Activated CD8-positive, alpha-beta T cell treated with anti-CD3 and anti-CD28 coated beads, Interleukin-2, amount 10 ng/mL, durations not matched to agents 7 days and 5 days (primary cell): ENCODE measurements at regions of chr1 and their contacts with region 1.

Region 1: DNA sequence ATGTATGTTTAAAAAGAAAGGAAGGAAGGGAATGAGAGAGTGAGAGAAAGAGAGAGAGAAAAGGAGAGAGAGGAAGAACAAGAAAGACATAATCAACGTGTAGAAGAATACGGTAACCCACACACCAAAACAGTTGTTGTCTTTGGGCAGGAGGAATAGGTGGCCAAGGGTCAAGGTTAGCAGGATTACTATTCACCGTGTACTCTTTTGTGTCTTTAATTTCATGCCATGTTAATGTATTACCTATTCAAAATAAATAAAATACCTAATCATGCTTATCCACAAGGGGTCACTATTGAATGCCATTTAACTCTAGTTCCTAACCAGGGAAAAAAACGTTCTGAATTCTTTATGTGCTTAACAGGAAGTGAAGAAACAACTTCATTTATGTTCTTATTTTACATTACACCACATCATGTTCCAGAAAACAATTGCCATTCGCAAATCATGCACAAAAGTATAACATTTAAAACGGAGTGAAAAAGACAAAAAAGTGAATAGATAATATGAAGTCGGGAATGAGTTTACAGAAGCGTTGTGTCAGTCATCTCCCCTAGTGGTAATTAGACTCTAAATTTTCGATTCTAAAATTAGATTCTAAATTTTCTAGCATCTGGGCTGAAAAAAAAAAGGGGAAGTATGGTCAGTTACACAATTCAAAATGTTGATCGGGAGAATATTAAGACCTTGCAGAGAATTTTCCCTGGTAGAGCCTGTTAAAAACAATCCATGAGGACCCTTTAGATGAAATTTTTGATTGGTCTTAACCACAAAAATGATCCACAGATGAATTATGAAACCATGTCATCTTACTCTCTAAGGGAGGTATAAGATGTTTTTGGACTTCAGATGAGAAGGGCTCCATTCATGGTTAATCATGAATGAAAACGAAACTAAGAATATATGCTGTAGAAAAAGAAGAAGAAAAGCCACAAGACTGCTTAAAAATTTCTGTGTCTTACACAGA is 700 bp upstream of the KMO start:
- DNase-seq: no peak
- ATAC-seq: peak; percentile 87
- H3K4me3 Mint-ChIP-seq: peak overlapping the region; percentile 92
- H3K27ac Mint-ChIP-seq: peak overlapping the region; percentile 88
- H3K4me1 Mint-ChIP-seq: peaks cover 11% of the 10 kb centered on the region
- H3K27me3 Mint-ChIP-seq: peaks cover 19% of the 10 kb centered on the region

Region 2: DNA sequence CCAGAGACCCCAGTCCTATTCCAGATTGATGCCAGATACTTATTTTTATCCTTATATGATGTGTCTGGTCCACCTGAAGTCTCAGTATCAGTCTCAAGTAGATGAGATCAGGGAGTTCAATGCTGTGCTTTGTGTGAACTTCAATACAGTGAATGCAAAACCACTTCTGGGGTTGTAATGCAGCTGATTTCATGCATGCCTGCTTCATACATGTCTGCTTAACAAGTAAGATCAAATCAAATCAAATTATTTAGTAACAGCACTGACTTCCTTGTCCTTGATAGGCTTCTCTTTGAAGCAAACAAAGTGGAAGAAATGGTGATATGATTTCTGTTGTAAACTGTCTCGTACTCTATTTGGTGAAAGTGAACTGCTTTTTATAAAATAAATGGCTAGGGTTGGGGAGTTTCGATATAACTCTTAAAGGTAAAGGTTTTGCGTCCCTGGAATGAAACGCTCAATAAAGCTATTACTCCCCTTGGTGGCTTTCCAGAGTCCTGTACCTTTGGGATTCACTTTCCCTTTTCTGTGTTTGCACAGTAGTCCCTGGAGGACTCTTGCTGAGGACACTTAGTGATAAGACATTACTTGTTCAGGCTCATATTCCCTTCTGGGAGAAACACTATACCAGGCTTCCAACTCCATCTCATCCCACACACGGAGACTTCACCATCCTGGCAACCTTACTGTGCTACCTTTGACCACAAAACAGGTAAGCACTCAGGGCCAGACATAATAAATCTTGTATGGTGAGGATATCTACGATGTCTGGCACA is 71.2 kb before region 1 on chr1:
- CTCF ChIA-PET with region 1: no interaction called
- POLR2A ChIA-PET with region 1: no interaction called
- DNase-seq: no peak
- ATAC-seq: no peak
- H3K4me3 Mint-ChIP-seq: no peak overlapping the region
- H3K27ac Mint-ChIP-seq: no peak overlapping the region
- H3K4me1 Mint-ChIP-seq: no peaks in the 10 kb centered on the region
- H3K27me3 Mint-ChIP-seq: no peaks in the 10 kb centered on the region

Region 3: DNA sequence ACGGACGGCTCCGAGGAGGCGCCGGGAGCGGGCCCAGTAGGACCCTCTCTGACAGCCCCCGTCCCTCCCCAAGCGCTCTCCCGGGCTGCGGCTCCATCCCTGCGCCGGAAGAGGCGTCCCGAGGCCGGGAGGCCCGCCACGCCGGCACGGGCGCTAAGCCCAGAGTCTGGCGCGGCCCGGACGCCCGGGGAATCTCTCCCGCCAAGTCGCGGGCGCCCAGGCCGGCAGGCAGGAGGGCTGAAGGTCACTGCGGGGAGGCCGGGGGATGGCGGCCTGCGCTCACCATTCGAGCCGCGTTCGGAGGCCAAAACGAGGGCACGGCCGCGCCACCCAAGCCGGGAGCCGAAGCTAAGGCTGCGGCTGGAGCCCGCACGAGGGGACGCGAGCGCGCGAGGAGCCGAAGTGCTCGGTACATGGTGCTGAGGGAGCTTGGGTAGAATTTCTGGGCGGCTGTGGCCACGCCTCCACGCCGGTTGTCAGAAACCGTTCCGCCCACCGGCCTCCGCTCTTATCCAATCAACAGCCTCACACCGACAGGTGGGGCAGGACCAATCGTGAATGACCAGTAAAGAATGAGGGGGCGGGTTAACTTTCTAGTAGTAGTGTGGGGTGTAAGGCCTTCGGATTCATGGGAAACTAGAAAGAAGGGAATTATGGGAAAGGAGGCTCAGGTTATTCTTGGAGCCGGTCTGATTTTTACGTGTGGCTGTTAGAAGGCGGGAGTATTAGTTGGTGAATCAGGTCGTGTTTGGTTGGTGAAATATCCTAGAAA is 12.0 kb before region 1 on chr1 and contains the start of gene FH:
- CTCF ChIA-PET with region 1: interaction called, 11 read pairs
- POLR2A ChIA-PET with region 1: no interaction called
- DNase-seq: peak; percentile 96
- ATAC-seq: peak; percentile 98
- H3K4me3 Mint-ChIP-seq: peak within 1 kb of the TSS; percentile 90
- H3K27ac Mint-ChIP-seq: peak within 1 kb of the TSS; percentile 85
- H3K4me1 Mint-ChIP-seq: peaks cover 21% of the 10 kb centered on the region
- H3K27me3 Mint-ChIP-seq: peaks cover 24% of the 10 kb centered on the region
- total RNA-seq, gene FH: 75.9 to 78.3 TPM